GM12878 (cell line): ENCODE measurements at regions of chr4 and their contacts with region 1.

Region 1: DNA sequence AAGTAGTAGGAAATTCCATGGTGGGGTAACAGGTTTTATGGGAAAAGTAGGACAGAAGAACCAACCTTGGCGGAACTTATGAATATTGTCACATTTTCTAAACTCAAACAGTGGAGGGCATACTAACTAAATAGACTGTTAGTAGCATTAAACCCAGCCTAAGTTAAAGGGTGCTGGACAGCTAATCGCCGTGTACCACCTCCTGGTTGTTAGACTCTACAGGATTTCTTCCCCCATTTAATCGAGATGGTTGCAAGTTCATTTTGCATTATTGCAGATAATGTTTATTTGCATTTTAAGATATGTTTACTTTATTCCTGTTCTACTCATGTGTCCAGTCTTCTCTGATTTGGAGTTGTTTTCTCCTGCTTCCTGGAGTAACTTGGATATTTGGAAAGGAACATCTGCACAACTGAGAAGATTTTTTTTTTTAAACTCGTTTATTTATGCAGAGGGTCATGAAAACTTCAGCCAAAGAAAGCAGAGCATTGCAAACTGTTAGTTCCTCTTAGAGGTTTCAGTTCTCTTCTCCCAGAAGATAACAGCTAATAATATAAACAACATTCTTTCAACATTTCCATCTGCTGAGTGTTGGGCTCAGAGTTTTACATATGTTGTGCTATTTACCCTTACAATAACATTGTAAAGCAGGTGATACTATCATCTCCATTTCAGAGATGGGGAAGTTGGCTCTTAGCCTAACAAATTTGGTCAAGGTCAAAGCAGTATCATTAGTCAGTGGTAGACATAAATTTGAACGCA is 51.5 kb upstream of the TBC1D9 start:
- DNase-seq: peak; percentile 71
- ATAC-seq: peak; percentile 83
- H3K4me3 ChIP-seq: peak overlapping the region; percentile 26; the same call in 1 of the 2 replicates
- H3K27ac ChIP-seq: peak overlapping the region; percentile 72
- H3K4me1 ChIP-seq: peaks cover 43% of the 10 kb centered on the region
- H3K27me3 ChIP-seq: no peaks in the 10 kb centered on the region
- CTCF ChIP-seq: no peak
- EP300 ChIP-seq: peak; percentile 66 to 67; a peak in 3 of 4 replicates
- POLR2A ChIP-seq: no peak
- RAD21 ChIP-seq: no peak

Region 2: DNA sequence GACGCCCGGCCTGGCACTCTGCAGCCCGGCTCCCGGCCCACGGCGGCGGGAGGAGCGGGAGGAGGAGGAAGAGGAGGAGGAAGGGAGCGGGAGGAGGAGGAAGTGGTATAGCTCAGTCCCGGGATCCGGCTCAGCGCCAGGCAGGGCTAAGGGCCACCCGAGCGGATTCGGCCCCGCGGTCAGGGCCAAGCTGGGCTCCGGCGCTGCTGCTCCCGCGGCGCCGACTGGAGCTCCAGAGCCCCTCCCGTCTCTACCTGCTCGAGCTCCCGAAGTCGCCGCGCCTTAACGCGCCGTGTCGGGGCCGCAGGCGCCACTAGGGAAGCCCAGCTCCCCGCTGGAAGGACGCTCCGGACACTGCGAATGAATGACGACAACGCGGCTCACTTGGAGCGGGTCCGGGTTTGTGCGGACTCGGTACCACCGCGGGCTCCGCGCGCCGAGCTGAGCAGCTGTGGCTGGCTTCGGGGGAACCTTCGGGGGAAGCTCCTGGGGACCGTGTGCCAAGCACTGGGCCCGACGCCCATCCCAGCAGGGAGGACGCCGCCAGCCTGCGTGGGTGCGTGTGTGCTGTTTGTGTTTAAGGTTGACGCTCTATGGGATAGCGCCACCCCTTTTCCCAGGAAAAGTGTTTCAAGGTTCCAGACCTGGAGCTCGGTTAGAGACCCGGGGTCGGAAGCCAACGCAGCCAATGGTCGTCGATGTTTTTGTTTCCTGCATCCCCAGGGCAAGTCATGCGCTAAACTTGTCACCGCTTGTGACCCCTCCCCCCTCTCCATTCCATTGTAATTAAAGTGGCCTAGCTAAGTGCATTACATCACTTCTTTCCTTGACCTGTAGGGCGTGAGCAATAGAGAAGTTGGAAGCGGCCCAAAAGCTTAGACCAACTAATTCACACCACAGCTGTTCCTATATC is 51.1 kb before region 1 on chr4 and contains the start of gene TBC1D9:
- CTCF ChIA-PET with region 1: no interaction called
- POLR2A ChIA-PET with region 1: no interaction called
- RAD21 ChIA-PET with region 1: no interaction called
- SMC1A ChIA-PET with region 1: no interaction called
- in situ Hi-C with region 1: no loop called
- intact Hi-C with region 1: loop called (anchors 5 kb)
- DNase-seq: peak; percentile 25
- ATAC-seq: peak; percentile 62
- H3K4me3 ChIP-seq: peak within 1 kb of the TSS; percentile 78
- H3K27ac ChIP-seq: peak within 1 kb of the TSS; percentile 35; the same call in 1 of the 2 replicates
- H3K4me1 ChIP-seq: peaks cover 3% of the 10 kb centered on the region; the same call in 1 of the 2 replicates
- H3K27me3 ChIP-seq: no peaks in the 10 kb centered on the region
- CTCF ChIP-seq: no peak
- EP300 ChIP-seq: no peak
- POLR2A ChIP-seq: peak; percentile 54; the same call in 1 of the 2 replicates
- RAD21 ChIP-seq: no peak
- polyA plus RNA-seq, gene TBC1D9: 0.87 to 1.4 TPM

Region 3: DNA sequence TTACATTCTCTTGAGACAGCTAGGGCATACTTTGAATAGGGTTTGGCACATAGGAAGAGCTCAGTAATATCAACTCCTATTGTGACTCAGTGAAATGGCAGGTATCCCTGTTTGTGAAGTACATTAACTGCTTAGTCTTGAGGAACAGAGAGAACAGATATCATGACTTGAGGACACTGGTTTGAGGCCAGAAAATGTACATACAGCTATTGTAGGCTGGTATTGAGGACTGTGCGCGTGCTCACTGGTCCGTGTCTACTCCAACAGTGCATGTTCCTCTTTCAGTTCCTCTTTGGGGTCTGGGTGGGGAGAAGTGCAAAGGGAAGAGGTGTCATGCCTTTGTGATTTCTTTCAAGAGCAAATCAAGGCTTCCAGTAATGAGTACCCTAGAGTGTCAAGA is 16.9 kb before region 1 on chr4:
- CTCF ChIA-PET with region 1: no interaction called
- POLR2A ChIA-PET with region 1: interaction called, 3 read pairs
- RAD21 ChIA-PET with region 1: interaction called, 5 read pairs
- SMC1A ChIA-PET with region 1: interaction called, 5 read pairs
- in situ Hi-C with region 1: no loop called
- intact Hi-C with region 1: loop called (anchors 2 kb)
- DNase-seq: peak; percentile 86
- ATAC-seq: peak; percentile 94
- H3K4me3 ChIP-seq: no peak overlapping the region
- H3K27ac ChIP-seq: peak overlapping the region; percentile 62
- H3K4me1 ChIP-seq: peaks cover 29% of the 10 kb centered on the region
- H3K27me3 ChIP-seq: no peaks in the 10 kb centered on the region
- CTCF ChIP-seq: no peak
- EP300 ChIP-seq: peak; percentile 30 to 85; a peak in 2 of 4 replicates
- POLR2A ChIP-seq: no peak
- RAD21 ChIP-seq: no peak

Region 4: GRCh38 chr4:140829825-140830224 is 22.2 kb after region 1 on chr4:
- CTCF ChIA-PET with region 1: no interaction called
- POLR2A ChIA-PET with region 1: no interaction called
- RAD21 ChIA-PET with region 1: no interaction called
- SMC1A ChIA-PET with region 1: no interaction called
- in situ Hi-C with region 1: no loop called
- intact Hi-C with region 1: loop called (anchors 2 kb)
- DNase-seq: peak; percentile 55
- ATAC-seq: peak; percentile 84
- H3K4me3 ChIP-seq: no peak overlapping the region
- H3K27ac ChIP-seq: peak overlapping the region; percentile 73
- H3K4me1 ChIP-seq: peaks cover 36% of the 10 kb centered on the region
- H3K27me3 ChIP-seq: no peaks in the 10 kb centered on the region
- CTCF ChIP-seq: no peak
- EP300 ChIP-seq: peak in 1 of 2 experiments; percentile 36; a peak in 1 of 4 replicates
- POLR2A ChIP-seq: no peak
- RAD21 ChIP-seq: no peak